CD4-positive, alpha-beta T cell (primary cell): ENCODE measurements at regions of chr2 and their contacts with region 1.

Region 1: GRCh38 chr2:151465771-151466170 is 56.1 kb downstream of the RIF1 start:
- DNase-seq: no peak
- ATAC-seq: no peak
- H3K4me3 ChIP-seq: no peak overlapping the region
- H3K4me3 Mint-ChIP-seq: no peak overlapping the region
- H3K27ac ChIP-seq: no peak overlapping the region
- H3K27ac Mint-ChIP-seq: no peak overlapping the region
- H3K4me1 ChIP-seq: no peaks in the 10 kb centered on the region
- H3K4me1 Mint-ChIP-seq: no peaks in the 10 kb centered on the region
- H3K27me3 ChIP-seq: no peaks in the 10 kb centered on the region
- H3K27me3 Mint-ChIP-seq: no peaks in the 10 kb centered on the region
- CTCF ChIP-seq: no peak

Region 2: DNA sequence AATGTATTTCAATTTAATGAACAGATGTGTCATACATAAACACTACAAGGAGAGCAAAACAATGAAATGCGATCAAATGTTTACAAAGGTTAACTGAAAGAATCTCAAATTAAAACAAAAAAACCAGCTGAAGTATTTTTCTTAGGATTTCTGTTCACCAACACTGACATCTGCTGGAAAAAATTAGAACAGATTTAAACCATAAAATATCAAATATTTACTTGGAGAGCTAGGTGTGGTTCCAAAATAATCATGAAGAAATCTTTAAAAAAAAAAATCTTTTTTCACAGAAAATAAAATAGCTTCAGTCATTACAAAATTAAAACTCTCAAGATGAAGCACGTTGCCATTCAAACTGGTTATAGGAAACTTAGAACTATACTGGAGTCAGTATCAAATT is 1892.0 kb before region 1 on chr2:
- CTCF ChIA-PET with region 1: no interaction called
- POLR2A ChIA-PET with region 1: no interaction called
- intact Hi-C with region 1: loop called in 1 of 2 experiments (anchors 10 kb)
- DNase-seq: no peak
- ATAC-seq: no peak
- H3K4me3 ChIP-seq: no peak overlapping the region
- H3K4me3 Mint-ChIP-seq: no peak overlapping the region
- H3K27ac ChIP-seq: no peak overlapping the region
- H3K27ac Mint-ChIP-seq: no peak overlapping the region
- H3K4me1 ChIP-seq: no peaks in the 10 kb centered on the region
- H3K4me1 Mint-ChIP-seq: peaks cover 31% of the 10 kb centered on the region
- H3K27me3 ChIP-seq: no peaks in the 10 kb centered on the region
- H3K27me3 Mint-ChIP-seq: no peaks in the 10 kb centered on the region
- CTCF ChIP-seq: no peak

Region 3: DNA sequence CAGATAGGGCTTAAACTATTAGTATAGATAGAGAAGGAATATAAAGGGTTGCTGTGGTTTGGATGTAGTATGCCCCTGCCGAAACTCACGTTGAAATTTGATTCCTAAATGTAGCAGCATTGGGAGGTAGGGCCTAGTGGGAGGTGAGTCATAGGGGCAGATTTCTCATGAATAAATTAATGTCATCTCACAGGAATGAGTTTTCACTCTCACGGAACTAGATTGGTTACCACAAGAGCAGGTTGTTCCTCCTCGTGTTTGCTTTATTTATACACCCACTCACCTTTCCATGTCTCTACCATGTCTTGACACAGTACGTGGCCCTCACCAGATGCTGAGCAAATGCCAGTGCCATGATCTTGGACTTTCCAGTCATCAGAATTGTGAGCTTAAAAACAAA is 422.3 kb before region 1 on chr2:
- CTCF ChIA-PET with region 1: no interaction called
- POLR2A ChIA-PET with region 1: no interaction called
- intact Hi-C with region 1: no loop called
- DNase-seq: no peak
- ATAC-seq: no peak
- H3K4me3 ChIP-seq: no peak overlapping the region
- H3K4me3 Mint-ChIP-seq: no peak overlapping the region
- H3K27ac ChIP-seq: no peak overlapping the region
- H3K27ac Mint-ChIP-seq: no peak overlapping the region
- H3K4me1 ChIP-seq: no peaks in the 10 kb centered on the region
- H3K4me1 Mint-ChIP-seq: no peaks in the 10 kb centered on the region
- H3K27me3 ChIP-seq: no peaks in the 10 kb centered on the region
- H3K27me3 Mint-ChIP-seq: peaks cover 4% of the 10 kb centered on the region
- CTCF ChIP-seq: no peak

Region 4: DNA sequence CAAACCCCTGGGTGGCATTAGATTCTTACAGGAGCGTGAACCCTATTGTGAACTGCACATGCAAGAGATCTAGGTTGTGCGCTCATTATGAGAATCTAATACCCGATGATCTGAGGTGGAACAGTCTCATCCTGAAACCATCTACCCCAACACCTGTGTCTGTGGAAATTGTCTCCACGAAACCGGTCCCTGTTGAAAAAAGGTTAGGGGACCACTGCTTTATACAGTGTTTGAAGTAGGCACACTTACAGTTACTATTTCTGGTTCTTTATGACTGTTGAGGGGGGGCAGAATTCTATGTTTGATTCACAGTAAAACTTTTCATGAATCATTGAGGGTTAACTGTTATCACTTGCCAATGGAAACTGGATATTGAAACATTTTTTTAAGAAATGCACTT is 16.0 kb after region 1 on chr2:
- CTCF ChIA-PET with region 1: no interaction called
- POLR2A ChIA-PET with region 1: no interaction called
- intact Hi-C with region 1: no loop called
- DNase-seq: no peak
- ATAC-seq: no peak
- H3K4me3 ChIP-seq: no peak overlapping the region
- H3K4me3 Mint-ChIP-seq: no peak overlapping the region
- H3K27ac ChIP-seq: no peak overlapping the region
- H3K27ac Mint-ChIP-seq: no peak overlapping the region
- H3K4me1 ChIP-seq: no peaks in the 10 kb centered on the region
- H3K4me1 Mint-ChIP-seq: peaks cover 5% of the 10 kb centered on the region
- H3K27me3 ChIP-seq: no peaks in the 10 kb centered on the region
- H3K27me3 Mint-ChIP-seq: no peaks in the 10 kb centered on the region
- CTCF ChIP-seq: no peak